ENCODE measurements at regions of chr12 and their contacts with region 1.

Region 1: DNA sequence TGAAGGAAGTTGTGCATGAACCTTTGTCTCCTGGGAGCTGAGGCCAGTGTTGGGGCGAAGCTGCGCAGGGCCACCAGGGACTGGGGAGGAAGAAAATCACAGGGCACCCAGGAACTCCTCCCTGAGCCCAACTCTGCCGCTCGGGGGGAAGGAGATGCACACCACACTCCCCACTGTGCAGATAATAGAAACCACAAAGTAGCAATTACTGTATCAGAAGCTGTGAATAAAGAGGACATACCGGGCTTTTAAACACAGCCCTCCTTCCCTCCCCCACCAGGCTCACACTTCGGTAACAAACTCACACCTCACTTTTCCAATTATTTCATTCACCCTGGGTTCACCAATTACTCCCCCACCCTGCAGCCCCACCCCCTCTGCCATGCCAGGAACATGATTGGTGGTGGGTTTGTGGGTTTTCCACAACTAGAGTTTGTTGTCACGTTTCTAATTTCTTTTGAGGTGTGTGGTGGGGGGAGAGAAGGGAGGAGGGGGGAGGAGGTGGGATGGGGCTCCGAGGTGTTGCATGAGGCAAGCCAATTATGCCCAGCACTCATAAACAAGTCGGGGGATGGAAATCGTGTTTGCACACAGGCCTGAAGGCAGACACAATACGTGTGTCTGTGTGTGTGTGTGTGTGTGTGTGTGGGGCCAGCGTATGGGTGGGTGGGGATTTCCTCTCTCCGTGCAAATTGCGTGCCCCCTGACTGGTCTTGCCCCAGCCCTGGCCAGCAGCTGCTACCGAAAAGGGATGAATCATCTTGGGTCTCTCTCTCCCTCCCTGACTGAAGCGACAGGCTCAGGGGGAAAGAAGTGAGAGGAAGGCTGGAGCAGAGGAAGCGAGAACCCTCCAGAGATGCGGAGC is 103.3 kb downstream of the RBM19 start:
- DNase-seq: no peak
- ATAC-seq: 0 out of 2 replicates have a peak, but pooled peaks have one; percentile 40
- H3K4me3 ChIP-seq: no peak overlapping the region
- H3K27ac ChIP-seq: no peak overlapping the region
- H3K4me1 ChIP-seq: no peaks in the 10 kb centered on the region
- H3K27me3 ChIP-seq: no peaks in the 10 kb centered on the region
- CTCF ChIP-seq: no peak

Region 2: DNA sequence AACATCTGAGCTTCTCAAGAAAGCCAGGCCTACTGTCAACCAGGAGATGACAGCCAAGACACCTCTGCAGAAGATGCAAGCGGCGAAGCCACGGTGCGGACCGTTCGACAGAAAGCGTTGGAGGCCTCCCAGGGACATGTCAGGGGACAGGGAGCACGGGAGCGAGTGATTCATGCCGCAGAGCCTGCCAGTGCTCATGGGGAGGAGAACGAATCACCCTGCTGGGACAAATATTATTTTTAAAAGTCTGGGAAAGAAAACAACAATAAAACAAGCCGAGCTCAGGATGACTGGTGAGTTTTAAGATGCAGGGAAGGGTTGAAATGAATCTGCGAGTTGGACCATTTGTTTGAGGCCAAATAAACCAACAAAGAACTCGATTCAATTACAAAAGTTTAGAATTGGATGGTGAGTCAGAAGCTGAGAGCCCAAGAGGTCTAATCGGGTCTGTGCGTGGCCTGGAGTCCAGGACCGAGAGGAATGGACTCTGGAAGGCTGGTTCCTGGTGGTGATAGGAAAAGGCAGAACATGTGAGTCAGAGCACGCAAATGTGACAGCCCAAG is 12.3 kb after region 1 on chr12:
- CTCF ChIA-PET with region 1: no interaction called
- POLR2A ChIA-PET with region 1: no interaction called
- in situ Hi-C with region 1: no loop called
- intact Hi-C with region 1: no loop called
- DNase-seq: no peak
- ATAC-seq: peak; percentile 48; the same call in 1 of the 2 replicates
- H3K4me3 ChIP-seq: no peak overlapping the region
- H3K27ac ChIP-seq: no peak overlapping the region
- H3K4me1 ChIP-seq: no peaks in the 10 kb centered on the region
- H3K27me3 ChIP-seq: no peaks in the 10 kb centered on the region
- CTCF ChIP-seq: no peak

Region 3: GRCh38 chr12:113899561-113900471 is 37.0 kb after region 1 on chr12:
- CTCF ChIA-PET with region 1: no interaction called
- POLR2A ChIA-PET with region 1: interaction called, 11 read pairs
- in situ Hi-C with region 1: no loop called
- intact Hi-C with region 1: no loop called
- DNase-seq: no peak
- ATAC-seq: no peak
- H3K4me3 ChIP-seq: no peak overlapping the region
- H3K27ac ChIP-seq: no peak overlapping the region
- H3K4me1 ChIP-seq: no peaks in the 10 kb centered on the region
- H3K27me3 ChIP-seq: no peaks in the 10 kb centered on the region
- CTCF ChIP-seq: no peak

Measured in Panc1 (cell line).